ENCODE measurements at regions of chr2 and their contacts with region 1.

Region 1: DNA sequence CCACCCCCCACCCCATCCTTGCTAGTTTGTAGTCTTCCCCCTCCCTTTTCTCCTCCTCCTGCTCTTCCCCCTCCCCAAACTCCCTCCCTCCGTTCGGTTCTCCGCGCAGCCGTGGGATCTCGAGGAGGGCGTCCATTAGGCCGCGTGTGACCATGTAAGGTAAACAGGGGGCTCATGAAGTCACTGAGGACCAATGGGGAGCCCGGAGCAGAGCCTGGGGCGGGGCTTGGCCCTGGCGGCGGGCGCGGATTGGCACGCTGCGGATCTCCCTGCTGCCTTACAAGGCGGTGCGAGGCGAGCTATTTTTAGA is 246 bp upstream of the KLF7 start:
- DNase-seq: peak; percentile 100

Region 2: GRCh38 chr2:206981739-206982340 is 184.2 kb before region 1 on chr2:
- intact Hi-C with region 1: loop called (anchors 5 kb)
- DNase-seq: peak; percentile 85

Region 3: DNA sequence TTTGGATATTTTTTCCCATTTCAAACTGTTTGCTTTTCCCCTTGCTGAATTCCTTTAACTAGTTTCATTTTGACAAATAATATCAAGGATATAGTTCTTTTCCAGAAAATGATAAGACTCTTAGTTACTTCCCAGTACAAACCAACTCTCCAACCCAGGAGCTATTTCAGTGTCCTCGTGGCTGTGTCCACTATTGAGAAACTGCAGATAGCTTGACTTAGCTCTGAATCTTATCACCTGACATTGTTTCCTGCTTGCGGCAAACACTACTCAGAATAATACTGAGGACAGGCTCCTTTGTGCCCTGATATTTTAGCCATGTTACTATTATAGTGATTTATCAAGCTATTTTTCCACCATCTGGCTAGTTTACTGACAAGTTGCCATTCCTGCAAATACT is 74.8 kb before region 1 on chr2:
- intact Hi-C with region 1: loop called (anchors 2 kb)
- DNase-seq: no peak

Region 4: GRCh38 chr2:207143215-207144172 is 22.5 kb before region 1 on chr2:
- intact Hi-C with region 1: loop called (anchors 1 kb)
- DNase-seq: peak; percentile 81

Region 5: DNA sequence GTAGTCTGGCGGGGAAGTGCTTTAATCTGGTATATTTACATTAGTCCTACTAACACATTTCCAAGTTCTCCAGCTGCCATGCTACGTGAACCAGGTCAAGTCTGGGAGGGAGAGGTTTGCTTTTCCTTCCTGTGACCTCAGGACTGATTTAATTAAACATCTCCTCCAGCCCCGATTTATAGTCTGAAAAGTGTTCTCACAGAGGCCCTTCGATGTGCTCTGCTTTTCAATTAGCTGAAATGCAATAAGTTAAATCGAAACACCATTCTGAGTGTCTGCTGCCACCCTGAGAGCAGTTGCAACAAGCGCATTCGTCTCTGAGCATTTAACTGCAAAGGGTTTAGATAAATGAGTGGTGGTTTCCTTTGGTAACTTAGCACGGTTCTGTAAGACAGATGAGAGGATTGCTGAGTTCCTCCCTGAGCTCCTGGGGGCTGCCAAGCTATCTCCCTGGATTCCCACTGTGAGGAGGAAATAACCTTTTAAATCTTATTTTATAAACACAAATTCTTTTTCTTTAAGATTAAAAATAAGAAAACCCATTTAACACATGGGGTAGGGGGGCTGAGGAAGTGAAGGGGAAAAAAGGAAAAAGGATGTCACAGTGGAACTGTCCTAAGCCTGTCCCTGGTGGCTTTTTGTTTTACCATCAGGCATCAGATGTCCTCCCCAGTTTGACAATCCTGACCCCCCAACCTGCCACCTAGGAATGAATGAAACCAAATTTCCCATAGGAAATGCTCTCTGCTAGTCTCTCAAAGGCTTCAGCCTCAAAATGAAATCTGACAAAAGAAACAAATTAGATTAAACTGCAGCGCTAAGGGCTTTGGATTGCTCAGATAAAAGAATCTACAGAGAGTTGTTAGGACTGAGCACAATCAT is 307.3 kb after region 1 on chr2:
- intact Hi-C with region 1: loop called (anchors 2 kb)
- DNase-seq: no peak